ENCODE measurements at regions of chr17 and their contacts with region 1.

Region 1: GRCh38 chr17:18248300-18248731 is 10.2 kb downstream of the FLII start:
- DNase-seq: peak in 9 of 10 donors; percentile 45 to 79 (median 73)
- H3K4me3 ChIP-seq: no peak overlapping the region
- H3K27ac ChIP-seq: peak overlapping the region in 57 of 59 donors; percentile 13 to 91 (median 76)
- H3K27me3 ChIP-seq: no peaks in the 10 kb centered on the region
- CTCF ChIP-seq: peak; percentile 42 to 87 (median 71)

Region 2: GRCh38 chr17:18225121-18225566 is 23.2 kb before region 1 on chr17:
- intact Hi-C with region 1: no loop called
- DNase-seq: peak; percentile 92 to 98 (median 96)
- H3K4me3 ChIP-seq: peak overlapping the region in 58 of 59 donors; percentile 38 to 86 (median 56)
- H3K27ac ChIP-seq: peak overlapping the region in 40 of 59 donors; percentile 13 to 82 (median 56)
- H3K27me3 ChIP-seq: no peaks in the 10 kb centered on the region
- CTCF ChIP-seq: peak in 10 of 56 donors; percentile 8 to 29 (median 18)

Region 3: DNA sequence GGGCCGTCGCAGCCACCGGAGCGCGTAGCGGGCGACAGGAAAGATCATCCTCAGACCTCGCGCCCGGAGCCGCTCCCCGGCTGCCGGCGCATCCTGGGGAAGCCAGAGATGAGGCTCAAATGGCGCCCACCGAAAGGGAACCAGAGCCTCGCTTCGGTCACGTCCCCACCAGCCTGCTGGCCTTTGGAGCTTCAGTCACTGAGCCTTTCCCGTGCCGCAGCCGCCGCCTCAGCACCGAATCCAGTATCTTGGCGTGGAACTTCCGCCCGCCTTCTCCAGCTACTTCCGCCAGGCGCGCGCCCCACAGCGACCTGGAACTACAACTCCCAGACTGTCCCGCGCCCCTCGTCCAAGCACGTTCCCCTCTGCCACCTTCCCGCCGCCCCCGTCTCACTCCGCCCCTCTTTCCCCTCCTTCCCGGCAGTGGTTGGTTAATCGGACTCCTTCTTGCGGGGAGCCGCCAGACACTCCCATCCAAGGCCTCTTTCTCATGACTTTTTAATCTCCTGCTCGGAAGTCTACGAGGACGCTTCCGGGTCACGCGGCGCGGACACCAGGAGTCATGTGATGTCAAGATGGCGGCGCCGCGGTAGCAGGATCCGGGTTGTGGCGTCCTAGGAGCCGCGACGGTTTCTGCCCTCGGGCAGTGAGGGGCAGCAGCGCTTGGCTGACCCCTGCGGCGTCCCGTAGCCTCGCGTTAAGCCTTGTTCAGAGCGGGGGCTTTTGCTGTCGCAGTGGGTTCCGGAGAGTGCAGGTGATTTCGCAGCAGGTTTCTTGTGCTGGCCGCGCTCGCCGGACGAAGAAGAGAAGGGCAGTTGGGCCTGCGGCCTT is 66.6 kb after region 1 on chr17 and contains the starts of genes SMCR8 and TOP3A:
- intact Hi-C with region 1: no loop called
- DNase-seq: peak; percentile 94 to 98 (median 97)
- H3K4me3 ChIP-seq: peak within 1 kb of the TSS; percentile 59 to 100 (median 94)
- H3K27ac ChIP-seq: peak within 1 kb of the TSS; percentile 27 to 98 (median 91)
- H3K27me3 ChIP-seq: no peaks in the 10 kb centered on the region
- CTCF ChIP-seq: peak in 35 of 56 donors; percentile 3 to 59 (median 26)
- total RNA-seq, gene SMCR8: 13.6 to 22.3 (median 18.4) TPM
- total RNA-seq, gene TOP3A: 30.1 to 65.0 (median 46.2) TPM

Region 4: GRCh38 chr17:18626152-18626870 is 378.0 kb after region 1 on chr17:
- intact Hi-C with region 1: loop called in 1 of 2 experiments (anchors 10 kb)
- DNase-seq: no peak
- H3K4me3 ChIP-seq: peak overlapping the region in 48 of 59 donors; percentile 10 to 71 (median 49)
- H3K27ac ChIP-seq: peak overlapping the region in 32 of 59 donors; percentile 4 to 80 (median 63)
- H3K27me3 ChIP-seq: peaks cover 0 to 25% (median 0%) of the 10 kb centered on the region in 45 donors
- CTCF ChIP-seq: no peak